Right ventricle myocardium inferior (tissue), 1 donor: ENCODE measurements at regions of chr20 and their contacts with region 1.

Region 1: DNA sequence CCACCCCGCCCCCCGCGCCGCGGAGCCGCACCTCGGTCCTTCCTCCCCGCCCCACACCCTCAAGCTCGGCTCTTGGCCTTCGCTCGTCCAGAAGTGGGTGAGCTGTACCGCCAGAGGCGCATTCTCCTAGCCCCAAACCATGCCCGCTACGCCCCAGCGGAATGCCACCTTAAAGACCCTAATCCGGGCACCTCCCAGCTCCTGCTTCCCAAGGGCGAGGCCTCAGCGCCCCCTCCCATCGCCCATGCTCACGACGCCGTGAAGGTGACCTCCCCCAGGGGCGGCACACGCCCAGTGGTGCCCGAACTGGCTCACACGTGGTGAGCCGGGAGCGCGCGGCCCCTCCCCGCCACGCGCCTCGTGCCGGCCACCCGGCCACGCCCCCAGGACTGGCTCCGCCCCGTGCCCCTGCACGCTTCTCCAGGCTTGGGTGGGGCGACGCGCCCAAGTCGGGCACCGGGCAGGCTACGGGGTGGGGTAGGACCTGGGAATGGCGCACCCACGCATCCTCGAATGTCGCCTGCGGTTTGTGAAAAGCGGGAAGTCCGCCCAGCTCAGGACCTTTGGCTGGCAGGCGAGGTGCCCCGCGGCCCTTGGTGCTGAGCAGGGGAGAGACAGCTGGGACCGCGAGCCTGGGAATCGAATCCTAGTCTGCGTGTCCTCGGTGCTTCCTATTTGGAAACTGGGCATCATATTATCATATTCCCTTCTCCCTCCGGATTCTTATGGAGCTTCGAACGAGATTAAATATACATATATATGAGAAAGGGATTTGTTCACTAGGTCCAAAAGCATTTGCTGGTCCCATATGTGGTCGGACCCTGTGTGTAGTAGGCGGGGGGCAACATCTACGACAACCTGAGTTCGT is 941 bp upstream of the SOX12 start:
- DNase-seq: peak; percentile 94
- ATAC-seq: peak; percentile 79

Region 2: GRCh38 chr20:278607-279571 is 45.5 kb before region 1 on chr20:
- intact Hi-C with region 1: loop called (anchors 5 kb)
- DNase-seq: peak; percentile 75
- ATAC-seq: peak; percentile 60